Activated CD8-positive, alpha-beta T cell treated with anti-CD3 and anti-CD28 coated beads for 36 hours (primary cell): ENCODE measurements at regions of chr5 and their contacts with region 1.

Region 1: DNA sequence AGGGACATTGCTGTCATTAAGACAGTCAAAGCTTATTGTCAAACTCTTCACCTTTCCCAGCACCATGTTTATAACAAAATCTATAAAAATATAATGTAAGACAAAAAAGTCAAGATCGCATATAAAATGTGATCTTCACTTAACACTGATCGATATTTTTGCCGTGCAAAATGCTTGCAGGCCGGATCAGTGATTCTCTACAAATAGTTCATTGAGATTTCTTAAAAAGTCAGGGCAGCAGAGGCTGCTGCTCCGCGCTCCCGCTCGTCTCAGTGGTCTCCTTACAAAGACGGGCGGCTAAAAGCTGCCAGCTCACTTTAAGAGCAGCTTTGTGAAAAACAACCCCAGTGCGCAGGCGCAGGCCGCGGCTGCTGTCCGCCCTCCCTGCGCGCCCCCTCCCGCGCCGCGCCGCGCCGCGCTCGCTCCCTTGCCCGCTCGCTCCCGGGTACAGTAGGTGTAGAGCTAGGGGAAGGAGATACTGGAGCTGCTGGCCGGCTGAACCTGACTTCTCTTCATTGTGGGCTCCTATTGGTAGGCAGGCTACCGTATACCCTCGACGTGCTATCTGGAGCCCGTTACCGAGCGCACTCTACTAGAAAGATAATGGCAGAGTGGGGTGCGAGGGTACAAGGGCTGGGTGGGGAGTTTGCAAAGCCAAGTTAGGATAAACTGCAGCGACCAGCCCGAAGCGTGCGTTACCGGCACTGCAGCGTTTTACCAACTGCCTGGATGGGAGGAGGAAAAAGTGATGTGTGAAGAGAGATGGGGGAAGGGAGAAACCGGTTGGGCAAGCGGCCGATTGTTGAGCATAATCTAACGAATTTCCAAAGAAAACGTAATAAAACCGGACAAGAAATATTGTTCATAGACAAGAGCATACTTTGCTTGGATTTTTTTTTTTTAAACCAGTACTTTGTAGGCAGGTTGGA is at the start of gene ARRDC3:
- DNase-seq: peak; percentile 96
- ATAC-seq: peak; percentile 63
- H3K4me3 Mint-ChIP-seq: peak within 1 kb of the TSS; percentile 93
- H3K27ac Mint-ChIP-seq: peak within 1 kb of the TSS; percentile 98
- H3K4me1 Mint-ChIP-seq: peaks cover 14% of the 10 kb centered on the region
- H3K27me3 Mint-ChIP-seq: no peaks in the 10 kb centered on the region
- CTCF ChIP-seq: no peak
- total RNA-seq, gene ARRDC3: 35.4 to 39.2 TPM

Region 2: GRCh38 chr5:91101600-91102379 is 281.5 kb before region 1 on chr5:
- CTCF ChIA-PET with region 1: interaction called, 21 read pairs
- POLR2A ChIA-PET with region 1: no interaction called
- intact Hi-C with region 1: loop called (anchors 2 kb)
- DNase-seq: peak; percentile 70
- ATAC-seq: peak; percentile 99
- H3K4me3 Mint-ChIP-seq: no peak overlapping the region
- H3K27ac Mint-ChIP-seq: no peak overlapping the region
- H3K4me1 Mint-ChIP-seq: no peaks in the 10 kb centered on the region
- H3K27me3 Mint-ChIP-seq: no peaks in the 10 kb centered on the region
- CTCF ChIP-seq: peak; percentile 63

Region 3: DNA sequence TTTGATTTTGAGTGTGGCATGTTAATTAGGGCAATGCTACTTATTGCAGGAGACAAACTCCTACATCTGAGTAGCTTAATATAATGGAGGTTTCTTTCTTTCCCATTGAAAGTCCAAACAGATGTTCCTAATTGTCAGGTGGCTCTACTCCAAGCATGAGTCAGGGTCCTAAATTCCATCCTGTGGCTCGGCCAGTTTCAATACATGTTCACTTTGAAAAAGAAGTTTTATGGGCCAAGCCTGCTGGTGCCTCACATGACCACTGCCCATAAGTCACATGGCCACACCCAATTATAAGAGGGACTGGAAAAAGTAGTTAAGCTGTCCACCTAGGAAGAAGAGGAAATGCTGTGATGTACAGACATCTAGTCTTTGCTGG is 170.6 kb before region 1 on chr5:
- CTCF ChIA-PET with region 1: interaction called, 114 read pairs
- POLR2A ChIA-PET with region 1: interaction called, 6 read pairs
- intact Hi-C with region 1: no loop called
- DNase-seq: no peak
- ATAC-seq: no peak
- H3K4me3 Mint-ChIP-seq: no peak overlapping the region
- H3K27ac Mint-ChIP-seq: no peak overlapping the region
- H3K4me1 Mint-ChIP-seq: no peaks in the 10 kb centered on the region
- H3K27me3 Mint-ChIP-seq: peaks cover 2% of the 10 kb centered on the region
- CTCF ChIP-seq: no peak

Region 4: GRCh38 chr5:91235271-91235694 is 148.0 kb before region 1 on chr5:
- CTCF ChIA-PET with region 1: interaction called, 27 read pairs
- POLR2A ChIA-PET with region 1: interaction called, 3 read pairs
- intact Hi-C with region 1: no loop called
- DNase-seq: no peak
- ATAC-seq: no peak
- H3K4me3 Mint-ChIP-seq: no peak overlapping the region
- H3K27ac Mint-ChIP-seq: no peak overlapping the region
- H3K4me1 Mint-ChIP-seq: peaks cover 3% of the 10 kb centered on the region
- H3K27me3 Mint-ChIP-seq: peaks cover 1% of the 10 kb centered on the region
- CTCF ChIP-seq: no peak

Region 5: GRCh38 chr5:91272858-91273257 is 110.4 kb before region 1 on chr5:
- CTCF ChIA-PET with region 1: interaction called, 19 read pairs
- POLR2A ChIA-PET with region 1: interaction called, 4 read pairs
- intact Hi-C with region 1: no loop called
- DNase-seq: no peak
- ATAC-seq: peak; percentile 56
- H3K4me3 Mint-ChIP-seq: no peak overlapping the region
- H3K27ac Mint-ChIP-seq: no peak overlapping the region
- H3K4me1 Mint-ChIP-seq: peaks cover 24% of the 10 kb centered on the region
- H3K27me3 Mint-ChIP-seq: no peaks in the 10 kb centered on the region
- CTCF ChIP-seq: no peak

Region 6: DNA sequence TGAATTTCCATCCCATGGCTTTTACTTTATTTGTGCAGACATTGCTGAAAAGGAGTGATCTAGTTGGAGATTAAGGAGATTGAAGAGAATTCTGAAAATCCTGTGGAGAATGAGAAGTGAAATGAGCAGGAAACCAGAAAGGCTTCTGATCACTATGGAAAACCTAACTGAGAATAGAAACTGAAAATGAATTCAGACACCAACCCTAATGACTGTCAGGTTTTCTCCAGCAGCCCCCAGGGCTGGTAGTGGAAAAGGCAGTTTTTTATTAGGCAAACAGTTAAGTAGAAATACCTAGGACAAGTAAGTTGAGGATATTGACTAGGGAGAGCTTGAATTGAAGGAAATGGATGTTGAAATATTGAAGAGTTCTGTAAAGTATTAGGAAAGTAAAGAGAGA is 14.5 kb after region 1 on chr5:
- CTCF ChIA-PET with region 1: interaction called, 22 read pairs
- POLR2A ChIA-PET with region 1: interaction called, 3 read pairs
- intact Hi-C with region 1: no loop called
- DNase-seq: no peak
- ATAC-seq: no peak
- H3K4me3 Mint-ChIP-seq: no peak overlapping the region
- H3K27ac Mint-ChIP-seq: no peak overlapping the region
- H3K4me1 Mint-ChIP-seq: peaks cover 8% of the 10 kb centered on the region
- H3K27me3 Mint-ChIP-seq: no peaks in the 10 kb centered on the region
- CTCF ChIP-seq: no peak

Region 7: GRCh38 chr5:91754990-91755389 is 371.7 kb after region 1 on chr5:
- CTCF ChIA-PET with region 1: no interaction called
- POLR2A ChIA-PET with region 1: no interaction called
- intact Hi-C with region 1: no loop called
- DNase-seq: no peak
- ATAC-seq: no peak
- H3K4me3 Mint-ChIP-seq: no peak overlapping the region
- H3K27ac Mint-ChIP-seq: no peak overlapping the region
- H3K4me1 Mint-ChIP-seq: no peaks in the 10 kb centered on the region
- H3K27me3 Mint-ChIP-seq: no peaks in the 10 kb centered on the region
- CTCF ChIP-seq: no peak